ENCODE measurements at regions of chr1 and their contacts with region 1.

Region 1: GRCh38 chr1:109984456-109985275 is at the start of gene AHCYL1:
- DNase-seq: peak; percentile 100
- CTCF ChIP-seq: peak; percentile 96

Region 2: DNA sequence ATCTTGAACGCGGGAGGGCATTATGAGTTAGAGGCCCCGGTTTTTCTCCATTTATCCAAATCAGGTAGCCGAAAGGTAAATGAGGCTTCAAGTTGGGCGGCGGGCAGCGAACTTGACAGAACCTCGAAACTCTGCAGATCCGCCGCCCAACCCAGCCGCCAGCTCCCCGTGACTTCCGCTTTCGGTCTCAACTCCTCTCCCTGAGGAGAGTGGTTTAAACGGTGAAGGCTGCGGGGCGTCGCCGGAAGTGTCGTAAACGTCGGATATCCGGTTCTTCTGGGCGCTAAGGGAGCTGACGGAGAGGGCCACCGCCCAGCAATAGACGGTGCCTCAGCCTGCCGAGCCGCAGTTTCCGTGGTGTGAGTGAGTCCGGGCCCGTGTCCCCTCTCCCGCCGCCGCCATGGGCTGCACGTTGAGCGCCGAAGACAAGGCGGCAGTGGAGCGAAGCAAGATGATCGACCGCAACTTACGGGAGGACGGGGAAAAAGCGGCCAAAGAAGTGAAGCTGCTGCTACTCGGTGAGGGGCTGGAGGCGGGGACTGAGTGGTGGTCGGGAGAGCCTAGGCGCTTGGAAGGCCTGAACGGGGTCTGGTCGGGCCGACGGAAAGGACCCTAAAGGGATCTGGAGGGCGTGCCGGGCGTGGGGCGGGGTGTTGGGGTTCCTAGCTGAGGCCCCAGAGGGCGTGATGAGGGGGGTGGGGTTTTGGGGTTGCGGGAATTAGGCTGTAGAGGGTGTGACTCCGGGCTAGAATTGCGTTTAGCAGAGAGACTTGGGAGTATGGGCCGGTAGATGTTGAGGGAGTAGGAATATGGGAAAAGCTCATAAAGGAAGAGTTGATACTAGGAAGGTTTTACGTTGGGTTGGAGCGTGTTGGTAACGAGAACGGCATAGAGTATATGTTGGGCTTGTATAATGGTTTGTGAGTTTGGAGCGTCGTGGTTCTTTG is 436.1 kb before region 1 on chr1 and contains the start of gene GNAI3:
- CTCF ChIA-PET with region 1: interaction called, 38 read pairs
- POLR2A ChIA-PET with region 1: no interaction called
- DNase-seq: peak; percentile 95
- CTCF ChIP-seq: no peak

Region 3: DNA sequence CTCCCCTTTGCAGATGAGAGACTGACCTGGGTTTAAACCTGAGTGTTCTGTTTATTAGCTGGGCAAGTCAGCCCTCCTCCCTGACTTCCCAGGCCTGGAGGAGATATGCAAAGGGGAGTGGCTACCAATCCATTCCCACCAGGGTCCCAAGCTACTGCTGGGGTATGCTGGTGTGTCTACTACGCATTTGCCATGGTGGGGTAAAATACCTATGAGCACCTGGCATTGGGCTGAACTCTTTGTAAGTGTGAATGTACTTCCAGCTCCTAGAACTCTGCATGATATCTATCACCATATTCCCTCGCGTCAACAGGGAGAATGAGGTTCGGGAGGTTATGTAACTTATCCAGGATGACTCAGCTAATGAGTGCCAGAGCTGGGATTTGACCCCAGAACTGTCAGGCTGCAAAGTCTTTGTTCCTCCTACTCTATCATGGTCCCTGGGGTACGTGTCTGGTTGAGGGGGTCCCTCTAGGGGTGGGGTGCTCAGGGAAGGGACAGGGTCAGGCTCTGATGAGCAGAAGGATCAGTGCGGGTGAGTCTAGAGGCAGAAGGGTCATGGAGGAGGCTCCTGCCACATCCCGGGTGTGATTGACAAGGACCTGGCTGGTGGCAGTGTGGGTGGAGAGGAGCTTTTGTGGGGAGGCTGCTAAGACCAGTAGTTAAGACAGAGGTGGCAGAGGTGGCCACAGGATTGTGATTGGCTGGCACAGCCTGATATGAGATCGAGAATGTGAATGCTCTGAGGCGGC is 348.3 kb before region 1 on chr1:
- CTCF ChIA-PET with region 1: interaction called, 138 read pairs
- POLR2A ChIA-PET with region 1: interaction called, 5 read pairs
- DNase-seq: no peak
- CTCF ChIP-seq: no peak

Region 4: DNA sequence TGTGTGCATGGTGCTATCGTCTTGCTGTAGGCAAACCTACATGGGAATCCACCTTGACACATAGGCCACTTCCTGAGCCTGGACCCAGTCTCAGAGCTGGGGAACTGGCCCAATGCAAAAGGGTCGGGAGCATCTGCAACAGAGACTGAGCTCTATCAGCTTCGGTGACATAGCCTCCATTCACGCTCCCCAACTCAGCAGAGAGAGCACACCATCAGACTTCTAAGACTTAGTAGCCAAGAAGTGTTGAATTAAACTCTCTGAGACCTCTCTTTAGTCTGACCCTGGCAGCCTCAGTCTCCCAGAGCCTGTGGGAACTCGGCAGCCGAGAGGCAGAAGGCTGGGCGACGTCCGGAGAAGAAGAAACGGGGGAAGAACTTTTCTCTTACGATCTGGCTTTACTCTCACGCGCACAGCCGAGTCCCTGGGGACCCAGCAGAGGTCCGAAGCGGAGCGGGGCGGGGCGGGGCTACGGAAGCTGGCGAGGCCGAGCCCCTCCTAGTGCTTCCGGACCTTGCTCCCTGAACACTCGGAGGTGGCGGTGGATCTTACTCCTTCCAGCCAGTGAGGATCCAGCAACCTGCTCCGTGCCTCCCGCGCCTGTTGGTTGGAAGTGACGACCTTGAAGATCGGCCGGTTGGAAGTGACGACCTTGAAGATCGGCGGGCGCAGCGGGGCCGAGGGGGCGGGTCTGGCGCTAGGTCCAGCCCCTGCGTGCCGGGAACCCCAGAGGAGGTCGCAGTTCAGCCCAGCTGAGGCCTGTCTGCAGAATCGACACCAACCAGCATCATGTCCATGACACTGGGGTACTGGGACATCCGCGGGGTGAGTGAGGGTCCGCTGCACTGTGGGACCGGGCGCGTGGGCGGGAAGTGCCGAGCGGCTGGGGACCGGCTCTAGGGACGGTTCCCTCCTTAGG is 328.8 kb before region 1 on chr1 and contains the start of gene GSTM4:
- CTCF ChIA-PET with region 1: interaction called, 22 read pairs
- POLR2A ChIA-PET with region 1: no interaction called
- DNase-seq: peak; percentile 91
- CTCF ChIP-seq: no peak

Region 5: DNA sequence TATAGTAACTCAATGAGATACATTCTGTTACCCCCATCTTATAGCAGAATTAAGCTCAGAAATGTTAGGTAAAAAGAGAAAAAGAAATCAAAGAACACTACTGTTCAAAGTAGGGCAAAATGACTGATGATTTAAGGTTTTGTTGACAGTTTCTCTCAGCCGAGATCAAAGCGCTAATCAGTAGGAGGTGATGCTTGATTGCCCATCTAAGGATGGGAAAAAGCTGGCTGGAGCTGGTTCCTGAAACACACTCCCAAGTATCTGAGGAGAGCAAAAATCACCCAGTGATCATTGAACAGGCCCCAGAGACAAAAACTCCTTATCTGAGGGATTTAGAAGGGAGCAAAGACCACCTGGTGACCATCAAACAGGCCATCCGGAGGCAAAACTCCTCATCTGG is 138.5 kb before region 1 on chr1:
- CTCF ChIA-PET with region 1: interaction called, 12 read pairs
- POLR2A ChIA-PET with region 1: no interaction called
- DNase-seq: no peak
- CTCF ChIP-seq: no peak

Region 6: DNA sequence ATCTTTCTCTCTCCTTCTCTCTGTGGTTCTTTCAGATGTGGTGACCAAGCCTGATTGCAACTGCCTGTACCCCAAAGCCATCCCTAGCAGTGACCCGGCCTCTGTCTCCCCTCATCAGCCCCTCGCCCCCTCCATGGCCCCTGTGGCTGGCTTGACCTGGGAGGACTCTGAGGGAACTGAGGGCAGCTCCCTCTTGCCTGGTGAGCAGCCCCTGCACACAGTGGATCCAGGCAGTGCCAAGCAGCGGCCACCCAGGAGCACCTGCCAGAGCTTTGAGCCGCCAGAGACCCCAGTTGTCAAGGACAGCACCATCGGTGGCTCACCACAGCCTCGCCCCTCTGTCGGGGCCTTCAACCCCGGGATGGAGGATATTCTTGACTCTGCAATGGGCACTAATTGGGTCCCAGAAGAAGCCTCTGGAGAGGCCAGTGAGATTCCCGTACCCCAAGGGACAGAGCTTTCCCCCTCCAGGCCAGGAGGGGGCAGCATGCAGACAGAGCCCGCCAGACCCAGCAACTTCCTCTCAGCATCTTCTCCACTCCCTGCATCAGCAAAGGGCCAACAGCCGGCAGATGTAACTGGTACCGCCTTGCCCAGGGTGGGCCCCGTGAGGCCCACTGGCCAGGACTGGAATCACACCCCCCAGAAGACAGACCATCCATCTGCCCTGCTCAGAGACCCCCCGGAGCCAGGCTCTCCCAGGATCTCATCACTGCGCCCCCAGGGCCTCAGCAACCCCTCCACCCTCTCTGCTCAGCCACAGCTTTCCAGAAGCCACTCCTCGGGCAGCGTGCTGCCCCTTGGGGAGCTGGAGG is 61.3 kb before region 1 on chr1:
- CTCF ChIA-PET with region 1: interaction called, 10 read pairs
- POLR2A ChIA-PET with region 1: no interaction called
- DNase-seq: peak; percentile 70
- CTCF ChIP-seq: peak; percentile 20

Region 7: GRCh38 chr1:110011527-110012041 is 26.9 kb after region 1 on chr1:
- CTCF ChIA-PET with region 1: interaction called, 108 read pairs
- POLR2A ChIA-PET with region 1: interaction called, 3 read pairs
- DNase-seq: peak; percentile 80
- CTCF ChIP-seq: peak; percentile 50

Measured in GM10248 (cell line).